ENCODE measurements at regions of chr2 and their contacts with region 1.

Region 1: GRCh38 chr2:25951071-25951547 is 31.2 kb downstream of the KIF3C start:
- DNase-seq: peak; percentile 80
- H3K4me3 Mint-ChIP-seq: no peak overlapping the region
- H3K27ac Mint-ChIP-seq: no peak overlapping the region
- H3K4me1 Mint-ChIP-seq: no peaks in the 10 kb centered on the region
- H3K27me3 Mint-ChIP-seq: no peaks in the 10 kb centered on the region

Region 2: DNA sequence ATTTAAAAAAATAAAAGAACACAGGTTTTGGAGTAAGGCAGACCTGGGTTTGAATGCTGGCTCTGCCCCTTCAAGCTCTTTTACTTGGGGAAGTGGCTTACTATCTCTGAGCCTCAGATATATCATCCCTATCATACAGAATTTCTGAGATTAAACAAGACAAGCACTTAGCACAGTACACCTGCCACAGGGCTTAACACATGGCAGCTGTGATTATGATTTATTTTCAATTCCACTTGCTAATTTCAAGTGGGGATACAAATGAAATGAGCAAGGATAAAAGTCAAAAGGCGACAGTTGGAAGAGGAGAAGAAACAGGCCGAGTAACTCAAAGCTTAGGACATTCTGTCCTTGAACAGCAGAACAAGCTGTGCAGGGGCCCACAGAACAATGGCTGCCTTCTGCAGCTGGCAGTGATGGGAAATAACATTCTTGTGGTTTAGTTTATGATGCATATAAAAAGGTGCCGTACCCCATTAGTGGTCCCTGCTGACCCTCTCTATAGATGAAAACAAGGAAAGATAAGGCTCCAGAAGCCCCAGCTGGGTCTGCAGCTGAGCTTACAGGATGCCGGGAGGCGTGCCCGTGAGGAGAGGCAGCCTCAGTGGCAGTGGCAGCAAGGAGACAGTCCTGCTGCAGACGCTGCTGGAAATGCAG is 14.1 kb before region 1 on chr2:
- CTCF ChIA-PET with region 1: interaction called, 11 read pairs
- intact Hi-C with region 1: no loop called
- DNase-seq: no peak
- H3K4me3 Mint-ChIP-seq: no peak overlapping the region
- H3K27ac Mint-ChIP-seq: no peak overlapping the region
- H3K4me1 Mint-ChIP-seq: no peaks in the 10 kb centered on the region
- H3K27me3 Mint-ChIP-seq: no peaks in the 10 kb centered on the region

Region 3: DNA sequence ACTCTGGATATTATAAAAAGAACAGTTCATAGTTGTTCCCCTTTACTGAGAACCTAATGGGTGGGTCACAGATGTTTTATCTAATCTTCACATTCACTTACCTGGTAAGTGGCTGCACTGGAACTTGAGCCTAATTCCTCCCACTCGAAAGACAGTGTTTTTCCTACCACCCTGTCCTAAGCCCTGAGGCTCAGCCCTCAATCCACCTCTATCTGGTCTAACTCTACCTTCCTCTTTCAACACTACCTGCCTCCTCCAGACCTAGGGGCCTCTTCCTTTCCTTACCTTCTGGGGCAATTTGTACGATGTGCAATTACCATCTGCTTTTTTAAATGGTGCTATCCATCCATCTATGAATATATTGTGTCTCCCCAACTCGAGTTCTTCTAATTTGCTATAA is 40.9 kb after region 1 on chr2:
- CTCF ChIA-PET with region 1: interaction called, 15 read pairs
- intact Hi-C with region 1: loop called (anchors 1 kb)
- DNase-seq: no peak
- H3K4me3 Mint-ChIP-seq: no peak overlapping the region
- H3K27ac Mint-ChIP-seq: no peak overlapping the region
- H3K4me1 Mint-ChIP-seq: peaks cover 6% of the 10 kb centered on the region
- H3K27me3 Mint-ChIP-seq: no peaks in the 10 kb centered on the region

Region 4: GRCh38 chr2:26330113-26330549 is 379.0 kb after region 1 on chr2:
- CTCF ChIA-PET with region 1: interaction called, 4 read pairs
- intact Hi-C with region 1: loop called (anchors 1 kb)
- DNase-seq: peak; percentile 95
- H3K4me3 Mint-ChIP-seq: no peak overlapping the region
- H3K27ac Mint-ChIP-seq: no peak overlapping the region
- H3K4me1 Mint-ChIP-seq: peaks cover 7% of the 10 kb centered on the region
- H3K27me3 Mint-ChIP-seq: no peaks in the 10 kb centered on the region

Region 5: DNA sequence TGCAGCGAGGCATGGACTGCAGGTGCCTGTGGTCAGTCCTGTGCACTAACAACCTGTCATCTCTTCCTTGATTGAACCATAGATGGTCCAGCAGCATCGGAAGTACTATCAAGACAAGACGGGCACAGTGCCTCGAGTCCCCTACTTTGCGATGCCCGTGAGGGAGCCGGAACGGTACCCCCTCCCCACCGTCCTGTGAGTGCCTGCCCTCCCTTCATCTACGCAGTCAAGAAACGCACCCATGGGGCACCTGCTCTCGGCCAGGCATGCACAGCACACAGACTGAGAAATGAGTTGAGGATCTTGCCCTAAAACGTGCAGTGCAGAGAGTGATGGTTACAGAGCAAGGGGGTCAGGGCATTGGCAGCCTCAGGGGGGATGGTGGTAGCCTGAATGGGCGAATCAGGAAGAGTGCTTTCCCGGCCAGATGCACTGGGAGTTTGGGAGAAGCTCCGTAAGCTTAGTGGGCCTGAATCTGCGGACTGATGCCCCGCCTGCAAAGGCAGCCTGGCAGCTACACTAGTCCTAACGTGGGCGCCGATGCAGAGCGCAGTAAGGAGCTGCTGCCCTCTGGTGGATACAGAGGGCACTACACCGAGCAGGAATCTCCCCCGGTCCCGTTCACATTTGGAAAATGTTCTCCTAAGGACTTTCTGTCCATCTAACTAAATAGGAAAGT is 626.5 kb after region 1 on chr2:
- CTCF ChIA-PET with region 1: interaction called, 4 read pairs
- intact Hi-C with region 1: loop called (anchors 2 kb)
- DNase-seq: peak; percentile 72
- H3K4me3 Mint-ChIP-seq: no peak overlapping the region
- H3K27ac Mint-ChIP-seq: no peak overlapping the region
- H3K4me1 Mint-ChIP-seq: no peaks in the 10 kb centered on the region
- H3K27me3 Mint-ChIP-seq: peaks cover 2% of the 10 kb centered on the region

Measured in activated naive CD4-positive, alpha-beta T cell treated with anti-CD3 and anti-CD28 coated beads for 36 hours (primary cell).